Activated CD4-positive, alpha-beta T cell treated with anti-CD3 and anti-CD28 coated beads for 36 hours (primary cell): ENCODE measurements at regions of chr1 and their contacts with region 1.

Region 1: DNA sequence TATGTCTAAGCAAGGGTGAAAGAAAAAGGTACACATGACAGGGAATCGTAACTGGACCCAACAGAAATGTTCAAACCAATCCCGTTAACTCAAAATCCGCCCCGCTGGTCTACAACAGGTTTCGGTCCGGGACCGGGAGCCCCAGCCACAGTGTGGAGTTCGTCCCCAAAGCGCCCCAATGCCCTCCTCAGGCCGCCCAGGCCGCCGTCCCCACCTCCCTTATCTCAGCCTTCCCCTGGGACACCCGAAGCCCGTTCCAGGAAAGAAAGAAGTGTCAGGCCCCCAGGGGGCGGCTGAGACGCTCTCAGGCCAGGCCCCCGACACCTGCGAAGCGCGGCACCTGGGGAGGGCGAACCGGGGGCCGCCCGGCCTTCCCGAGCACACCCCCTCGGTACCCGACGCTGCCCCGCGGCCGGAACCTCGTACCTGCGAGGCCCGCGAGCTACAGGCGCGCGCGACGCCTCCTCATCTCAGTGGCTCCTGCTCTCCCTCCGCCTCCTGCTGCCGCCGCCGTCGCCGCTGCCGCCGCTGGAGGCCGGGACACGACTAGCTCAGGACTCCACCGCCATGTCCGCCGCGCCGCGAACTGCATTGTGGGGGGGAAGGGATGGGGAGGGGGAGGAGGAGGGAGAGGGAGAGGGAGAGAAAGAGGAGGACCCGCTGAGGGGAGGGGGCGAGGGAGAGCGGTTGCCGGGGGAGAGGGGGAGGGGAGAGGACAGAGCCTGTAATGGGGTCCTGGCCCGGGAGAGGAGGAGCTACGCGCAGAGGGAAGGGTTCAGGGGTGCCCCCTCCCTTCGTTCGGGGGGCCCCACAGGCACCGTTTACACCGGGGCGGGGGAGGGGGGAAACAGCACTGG is at the start of gene TUT4:
- DNase-seq: peak; percentile 90
- ATAC-seq: peak; percentile 57
- H3K4me3 Mint-ChIP-seq: no peak within 1 kb of the TSS
- H3K27ac Mint-ChIP-seq: peak within 1 kb of the TSS; percentile 84
- H3K4me1 Mint-ChIP-seq: peaks cover 34% of the 10 kb centered on the region
- H3K27me3 Mint-ChIP-seq: no peaks in the 10 kb centered on the region
- total RNA-seq, gene TUT4: 61.6 to 71.7 TPM

Region 2: DNA sequence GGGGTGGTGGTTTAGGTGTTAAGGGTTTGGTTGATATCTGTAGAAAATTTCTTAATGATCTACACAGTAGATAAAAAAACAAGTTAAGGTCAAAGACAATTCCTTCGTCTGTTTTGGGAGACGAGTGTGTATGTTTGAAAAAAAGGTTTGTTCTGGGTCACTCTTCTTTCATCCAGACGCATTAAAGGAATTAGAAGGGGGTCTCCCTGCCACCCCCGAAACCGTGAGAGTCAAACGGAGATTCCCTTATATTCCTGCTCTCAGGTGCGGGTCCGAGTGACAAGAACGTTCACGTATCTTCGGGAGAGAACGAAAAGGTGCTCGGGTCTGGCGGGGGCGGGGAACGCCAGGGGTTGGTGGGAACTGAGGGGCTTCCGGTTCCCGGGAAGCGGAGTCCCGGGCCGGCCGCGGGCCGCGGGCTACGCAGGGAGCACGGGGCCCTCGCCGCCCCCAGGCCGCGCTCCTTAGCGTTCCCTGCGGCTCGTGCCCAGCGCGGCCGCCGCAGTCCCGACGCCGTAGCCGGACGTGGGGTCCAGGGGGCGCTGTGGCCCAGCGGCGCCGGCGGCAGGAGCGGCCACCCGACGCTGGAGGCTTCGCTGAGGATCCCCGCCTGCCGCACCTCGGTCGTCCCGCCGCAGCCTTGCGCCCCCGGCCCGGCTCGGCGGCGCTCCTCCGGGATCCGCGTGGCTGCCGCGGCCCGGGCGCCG is 411.1 kb before region 1 on chr1 and contains the start of gene ZFYVE9:
- CTCF ChIA-PET with region 1: no interaction called
- POLR2A ChIA-PET with region 1: interaction called, 3 read pairs
- intact Hi-C with region 1: loop called (anchors 2 kb)
- DNase-seq: peak; percentile 83
- ATAC-seq: peak; percentile 62
- H3K4me3 Mint-ChIP-seq: peak within 1 kb of the TSS; percentile 80
- H3K27ac Mint-ChIP-seq: peak within 1 kb of the TSS; percentile 84
- H3K4me1 Mint-ChIP-seq: peaks cover 43% of the 10 kb centered on the region
- H3K27me3 Mint-ChIP-seq: peaks cover 9% of the 10 kb centered on the region
- total RNA-seq, gene ZFYVE9: 4.3 to 4.7 TPM

Region 3: DNA sequence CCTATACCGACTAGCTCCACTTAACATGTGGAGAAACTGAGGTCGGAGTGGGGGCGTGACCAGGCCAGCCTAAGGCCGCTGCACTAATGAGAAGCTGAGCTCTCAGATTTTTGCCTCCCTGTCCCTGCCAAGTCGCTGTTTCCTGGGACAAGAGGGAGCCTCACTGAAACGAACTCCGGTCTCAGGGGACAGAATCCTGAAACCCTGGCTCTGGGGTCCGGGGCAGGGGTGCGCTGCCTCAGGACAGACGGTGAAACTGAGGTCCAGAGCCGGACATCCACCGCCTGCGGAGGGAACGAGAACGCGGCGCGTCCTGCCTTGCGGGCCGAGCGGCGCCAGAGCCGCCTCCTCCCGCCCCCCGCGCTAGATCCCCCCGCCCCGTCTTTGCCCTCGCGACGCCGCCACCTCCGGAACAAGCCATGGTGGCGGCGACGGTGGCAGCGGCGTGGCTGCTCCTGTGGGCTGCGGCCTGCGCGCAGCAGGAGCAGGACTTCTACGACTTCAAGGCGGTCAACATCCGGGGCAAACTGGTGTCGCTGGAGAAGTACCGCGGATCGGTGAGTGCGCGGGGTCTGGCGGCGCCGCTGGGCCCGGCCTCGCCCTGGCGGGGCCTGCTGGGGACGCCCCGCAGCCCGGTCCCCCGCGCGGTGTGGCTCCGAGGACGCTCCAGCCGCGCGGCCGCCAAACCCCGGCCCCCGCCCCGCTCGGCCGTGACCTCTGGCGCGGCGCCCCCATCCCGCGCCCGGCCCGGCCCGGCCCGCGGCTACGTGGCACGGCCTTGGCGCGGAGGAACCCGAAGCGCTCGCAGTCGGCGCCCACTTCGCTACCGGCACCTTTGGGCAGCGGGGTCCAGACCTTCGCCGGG is 49.5 kb after region 1 on chr1 and contains the start of gene GPX7:
- CTCF ChIA-PET with region 1: interaction called, 4 read pairs
- POLR2A ChIA-PET with region 1: interaction called, 4 read pairs
- intact Hi-C with region 1: loop called (anchors 1 to 5 kb)
- DNase-seq: peak; percentile 72
- ATAC-seq: peak; percentile 70
- H3K4me3 Mint-ChIP-seq: peak within 1 kb of the TSS; percentile 86
- H3K27ac Mint-ChIP-seq: peak within 1 kb of the TSS; percentile 94
- H3K4me1 Mint-ChIP-seq: peaks cover 40% of the 10 kb centered on the region
- H3K27me3 Mint-ChIP-seq: no peaks in the 10 kb centered on the region
- total RNA-seq, gene GPX7: 19.0 to 23.1 TPM

Region 4: GRCh38 chr1:52683367-52683940 is 130.7 kb after region 1 on chr1:
- CTCF ChIA-PET with region 1: interaction called, 3 read pairs
- POLR2A ChIA-PET with region 1: no interaction called
- intact Hi-C with region 1: loop called in 1 of 2 experiments (anchors 5 kb)
- DNase-seq: no peak
- ATAC-seq: peak; percentile 37
- H3K4me3 Mint-ChIP-seq: no peak overlapping the region
- H3K27ac Mint-ChIP-seq: no peak overlapping the region
- H3K4me1 Mint-ChIP-seq: peaks cover 8% of the 10 kb centered on the region
- H3K27me3 Mint-ChIP-seq: no peaks in the 10 kb centered on the region

Region 5: DNA sequence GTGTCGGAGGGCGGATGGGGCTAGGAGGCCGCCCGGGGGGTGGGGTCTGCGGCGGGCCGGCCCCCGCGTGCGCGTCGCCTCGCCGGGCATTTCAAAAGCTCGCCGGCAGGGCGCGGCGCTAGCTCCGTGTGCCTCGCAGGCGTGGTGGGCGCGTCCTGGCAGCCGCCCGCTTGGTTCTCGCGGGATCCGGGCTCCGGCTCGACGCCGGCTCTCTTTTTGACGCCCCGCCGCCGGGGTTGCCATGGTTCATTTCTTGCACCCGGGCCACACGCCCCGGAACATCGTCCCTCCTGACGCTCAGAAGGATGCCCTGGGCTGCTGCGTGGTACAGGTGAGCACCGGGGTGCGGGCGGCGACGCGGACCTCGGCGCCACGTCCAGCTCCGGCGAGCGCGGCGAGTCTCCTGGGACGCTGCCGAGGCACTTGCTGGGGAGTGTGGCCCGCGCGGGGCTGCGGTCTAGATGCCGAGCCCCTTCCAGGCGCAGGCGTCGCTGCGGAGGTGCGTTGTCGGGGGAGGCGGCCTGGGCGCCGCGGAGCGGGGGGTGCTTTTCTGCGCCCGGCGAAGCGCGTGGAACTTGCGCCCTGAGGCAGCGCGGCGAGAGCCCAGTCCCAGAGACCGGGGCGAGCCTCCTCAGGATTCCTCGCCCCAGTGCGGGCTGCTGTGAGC is 290.0 kb after region 1 on chr1 and contains the start of gene ZYG11A:
- CTCF ChIA-PET with region 1: no interaction called
- POLR2A ChIA-PET with region 1: no interaction called
- intact Hi-C with region 1: loop called in 1 of 2 experiments (anchors 1 kb)
- DNase-seq: peak; percentile 89
- ATAC-seq: peak; percentile 98
- H3K4me3 Mint-ChIP-seq: peak within 1 kb of the TSS; percentile 58
- H3K27ac Mint-ChIP-seq: no peak within 1 kb of the TSS
- H3K4me1 Mint-ChIP-seq: peaks cover 5% of the 10 kb centered on the region
- H3K27me3 Mint-ChIP-seq: peaks cover 18% of the 10 kb centered on the region
- total RNA-seq, gene ZYG11A: 0.11 to 0.25 TPM